ENCODE measurements at regions of chr10 and their contacts with region 1.

Region 1: DNA sequence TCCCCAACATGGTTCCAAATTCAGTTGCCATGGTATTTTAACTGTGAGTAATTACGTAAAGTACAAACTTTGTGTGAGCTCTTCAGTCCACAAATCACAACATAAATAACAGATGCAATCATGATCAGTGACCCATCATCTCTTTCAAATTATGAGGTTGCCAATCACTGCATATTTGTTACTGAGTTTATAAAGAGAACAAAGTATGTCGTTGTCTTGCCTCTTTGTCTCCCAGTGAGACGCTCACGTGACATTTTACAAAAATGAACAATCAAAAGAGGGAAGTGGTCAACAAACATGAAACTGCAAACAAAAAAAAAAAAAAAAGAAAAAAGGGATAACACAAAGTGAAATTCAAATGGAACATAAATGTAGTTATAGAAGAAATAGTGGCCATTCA is 122.7 kb upstream of the PDSS1 start:
- DNase-seq: no peak
- ATAC-seq: no peak
- H3K4me3 ChIP-seq: no peak overlapping the region
- H3K27ac ChIP-seq: no peak overlapping the region
- H3K4me1 ChIP-seq: no peaks in the 10 kb centered on the region
- H3K27me3 ChIP-seq: no peaks in the 10 kb centered on the region
- CTCF ChIP-seq: no peak

Region 2: DNA sequence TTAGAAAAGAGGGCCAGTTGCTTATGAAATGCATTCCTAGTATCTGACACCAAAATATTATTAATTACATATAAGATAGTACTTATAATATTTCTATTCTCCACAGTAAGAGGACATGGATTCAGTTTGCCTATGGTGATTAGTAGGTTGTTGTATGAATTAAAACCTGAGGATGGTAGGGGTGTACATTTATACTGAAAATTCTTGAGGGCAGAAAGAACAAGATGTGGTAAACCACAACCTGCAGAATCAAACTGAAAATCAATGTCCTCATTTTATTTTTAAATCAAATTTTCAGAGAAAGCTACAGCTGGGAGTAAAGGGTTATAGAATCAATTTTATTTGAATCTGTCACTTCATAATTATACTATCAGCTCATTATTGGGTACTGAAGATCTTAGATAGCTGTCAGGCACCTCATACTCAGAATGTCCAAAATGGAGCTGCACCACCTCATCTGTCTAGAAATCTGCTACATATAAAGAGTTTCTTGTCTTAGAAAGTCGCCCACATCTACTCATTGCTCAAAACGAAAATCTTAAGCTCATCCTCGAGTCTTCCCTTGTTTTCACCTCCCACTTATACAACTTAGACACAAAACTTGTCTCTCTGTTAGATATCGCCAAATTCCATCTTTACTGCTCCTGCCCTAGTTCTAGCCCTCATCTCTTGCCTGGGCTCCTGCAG is 575.3 kb before region 1 on chr10:
- intact Hi-C with region 1: no loop called
- DNase-seq: no peak
- ATAC-seq: no peak
- H3K4me3 ChIP-seq: no peak overlapping the region
- H3K27ac ChIP-seq: no peak overlapping the region
- H3K4me1 ChIP-seq: no peaks in the 10 kb centered on the region
- H3K27me3 ChIP-seq: no peaks in the 10 kb centered on the region
- CTCF ChIP-seq: no peak

Region 3: GRCh38 chr10:26977635-26978034 is 402.9 kb after region 1 on chr10:
- intact Hi-C with region 1: no loop called
- DNase-seq: no peak
- ATAC-seq: no peak
- H3K4me3 ChIP-seq: no peak overlapping the region
- H3K27ac ChIP-seq: no peak overlapping the region
- H3K4me1 ChIP-seq: no peaks in the 10 kb centered on the region
- H3K27me3 ChIP-seq: no peaks in the 10 kb centered on the region
- CTCF ChIP-seq: no peak

Region 4: GRCh38 chr10:27319752-27320561 is 745.2 kb after region 1 on chr10:
- intact Hi-C with region 1: loop called (anchors 5 kb)
- DNase-seq: peak; percentile 83
- ATAC-seq: peak; percentile 86 to 95
- H3K4me3 ChIP-seq: peak overlapping the region; percentile 48
- H3K27ac ChIP-seq: peak overlapping the region; percentile 60
- H3K4me1 ChIP-seq: peaks cover 8% of the 10 kb centered on the region
- H3K27me3 ChIP-seq: peaks cover 18% of the 10 kb centered on the region
- CTCF ChIP-seq: no peak

Measured in lower lobe of right lung (tissue), 2 donors.